Activated CD8-positive, alpha-beta T cell treated with anti-CD3 and anti-CD28 coated beads, Interleukin-2, amount 10 ng/mL, durations not matched to agents 7 days and 5 days (primary cell): ENCODE measurements at regions of chr2 and their contacts with region 1.

Region 1: GRCh38 chr2:69724540-69725159 is 17.3 kb upstream of the ANXA4 start:
- DNase-seq: peak; percentile 91
- ATAC-seq: peak; percentile 95
- H3K4me3 Mint-ChIP-seq: peak overlapping the region; percentile 53
- H3K27ac Mint-ChIP-seq: no peak overlapping the region
- H3K4me1 Mint-ChIP-seq: peaks cover 13% of the 10 kb centered on the region
- H3K27me3 Mint-ChIP-seq: peaks cover 5% of the 10 kb centered on the region

Region 2: GRCh38 chr2:69559442-69560146 is 165.1 kb before region 1 on chr2:
- CTCF ChIA-PET with region 1: interaction called, 40 read pairs
- POLR2A ChIA-PET with region 1: no interaction called
- DNase-seq: no peak
- ATAC-seq: peak; percentile 54
- H3K4me3 Mint-ChIP-seq: no peak overlapping the region
- H3K27ac Mint-ChIP-seq: no peak overlapping the region
- H3K4me1 Mint-ChIP-seq: peaks cover 48% of the 10 kb centered on the region
- H3K27me3 Mint-ChIP-seq: no peaks in the 10 kb centered on the region

Region 3: GRCh38 chr2:69643602-69644505 is 80.8 kb before region 1 on chr2 and contains the start of gene AAK1:
- CTCF ChIA-PET with region 1: interaction called, 28 read pairs
- POLR2A ChIA-PET with region 1: interaction called, 4 read pairs
- DNase-seq: peak; percentile 90
- ATAC-seq: peak; percentile 66
- H3K4me3 Mint-ChIP-seq: peak within 1 kb of the TSS; percentile 92
- H3K27ac Mint-ChIP-seq: peak within 1 kb of the TSS; percentile 98
- H3K4me1 Mint-ChIP-seq: peaks cover 56% of the 10 kb centered on the region
- H3K27me3 Mint-ChIP-seq: no peaks in the 10 kb centered on the region
- total RNA-seq, gene AAK1: 105 to 107 TPM

Region 4: GRCh38 chr2:69767034-69767433 is 42.4 kb after region 1 on chr2:
- CTCF ChIA-PET with region 1: interaction called, 20 read pairs
- POLR2A ChIA-PET with region 1: no interaction called
- DNase-seq: no peak
- ATAC-seq: no peak
- H3K4me3 Mint-ChIP-seq: no peak overlapping the region
- H3K27ac Mint-ChIP-seq: no peak overlapping the region
- H3K4me1 Mint-ChIP-seq: peaks cover 70% of the 10 kb centered on the region
- H3K27me3 Mint-ChIP-seq: no peaks in the 10 kb centered on the region

Region 5: DNA sequence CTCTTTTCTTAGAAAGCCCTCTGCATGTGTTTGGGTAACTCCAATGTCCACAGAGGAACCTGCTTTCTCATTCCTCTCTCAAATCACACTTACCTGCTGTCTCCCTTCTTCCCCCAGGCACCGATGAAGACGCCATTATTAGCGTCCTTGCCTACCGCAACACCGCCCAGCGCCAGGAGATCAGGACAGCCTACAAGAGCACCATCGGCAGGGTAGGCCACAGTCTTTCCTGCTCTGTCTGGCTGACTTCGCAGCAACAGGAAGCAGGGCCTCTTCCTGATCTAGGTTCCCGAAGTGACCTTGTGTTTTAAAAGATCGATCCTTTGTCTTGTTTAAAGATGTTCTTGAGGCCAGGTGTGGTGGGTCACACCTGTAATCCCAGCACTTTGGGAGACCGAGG is 79.8 kb after region 1 on chr2:
- CTCF ChIA-PET with region 1: interaction called, 434 read pairs
- POLR2A ChIA-PET with region 1: no interaction called
- DNase-seq: peak; percentile 20
- ATAC-seq: peak; percentile 33
- H3K4me3 Mint-ChIP-seq: no peak overlapping the region
- H3K27ac Mint-ChIP-seq: peak overlapping the region; percentile 82
- H3K4me1 Mint-ChIP-seq: peaks cover 19% of the 10 kb centered on the region
- H3K27me3 Mint-ChIP-seq: peaks cover 2% of the 10 kb centered on the region

Region 6: GRCh38 chr2:69893684-69894551 is 169.3 kb after region 1 on chr2 and contains the start of gene SNRNP27:
- CTCF ChIA-PET with region 1: interaction called, 20 read pairs
- POLR2A ChIA-PET with region 1: no interaction called
- DNase-seq: peak; percentile 87
- ATAC-seq: peak; percentile 95
- H3K4me3 Mint-ChIP-seq: peak within 1 kb of the TSS; percentile 98
- H3K27ac Mint-ChIP-seq: peak within 1 kb of the TSS; percentile 95
- H3K4me1 Mint-ChIP-seq: peaks cover 42% of the 10 kb centered on the region
- H3K27me3 Mint-ChIP-seq: no peaks in the 10 kb centered on the region
- total RNA-seq, gene SNRNP27: 53.0 to 56.0 TPM

Region 7: DNA sequence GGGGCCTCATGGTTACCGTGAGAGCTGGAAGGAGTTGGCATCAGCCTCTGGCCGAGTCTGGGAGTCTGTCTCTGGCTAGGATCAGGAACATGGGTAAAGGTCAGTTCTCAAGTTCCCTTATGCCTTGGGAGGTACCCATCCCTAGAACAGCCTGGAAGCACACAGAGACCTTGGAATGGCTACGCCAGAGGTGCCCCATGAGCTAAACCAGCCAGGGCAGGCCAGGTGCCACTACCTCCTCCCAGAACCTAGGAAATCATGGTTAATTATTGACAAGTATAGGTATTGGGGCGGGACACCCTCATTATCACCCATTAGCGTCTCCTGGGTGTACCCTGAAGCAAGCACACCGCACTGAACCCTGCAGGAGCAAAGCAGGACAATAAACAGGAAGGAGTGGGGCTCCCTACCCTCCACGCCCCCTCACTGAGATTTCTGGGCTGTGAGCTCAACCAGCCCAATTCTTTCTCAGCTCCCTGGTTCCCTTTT is 239.7 kb after region 1 on chr2:
- CTCF ChIA-PET with region 1: no interaction called
- POLR2A ChIA-PET with region 1: no interaction called
- DNase-seq: no peak
- ATAC-seq: no peak
- H3K4me3 Mint-ChIP-seq: no peak overlapping the region
- H3K27ac Mint-ChIP-seq: no peak overlapping the region
- H3K4me1 Mint-ChIP-seq: peaks cover 4% of the 10 kb centered on the region
- H3K27me3 Mint-ChIP-seq: peaks cover 4% of the 10 kb centered on the region